ENCODE measurements at regions of chr22 and their contacts with region 1.

Region 1: GRCh38 chr22:24156913-24157821 is 24.1 kb upstream of the SUSD2 start:
- DNase-seq: peak; percentile 93
- ATAC-seq: peak; percentile 90
- H3K4me3 Mint-ChIP-seq: peak overlapping the region; percentile 75
- H3K27ac Mint-ChIP-seq: no peak overlapping the region
- H3K4me1 Mint-ChIP-seq: peaks cover 21% of the 10 kb centered on the region
- H3K27me3 Mint-ChIP-seq: 0 out of 2 replicates have a peak, but pooled peaks cover 3% of the 10 kb centered on the region
- CTCF ChIP-seq: peak; percentile 64

Region 2: DNA sequence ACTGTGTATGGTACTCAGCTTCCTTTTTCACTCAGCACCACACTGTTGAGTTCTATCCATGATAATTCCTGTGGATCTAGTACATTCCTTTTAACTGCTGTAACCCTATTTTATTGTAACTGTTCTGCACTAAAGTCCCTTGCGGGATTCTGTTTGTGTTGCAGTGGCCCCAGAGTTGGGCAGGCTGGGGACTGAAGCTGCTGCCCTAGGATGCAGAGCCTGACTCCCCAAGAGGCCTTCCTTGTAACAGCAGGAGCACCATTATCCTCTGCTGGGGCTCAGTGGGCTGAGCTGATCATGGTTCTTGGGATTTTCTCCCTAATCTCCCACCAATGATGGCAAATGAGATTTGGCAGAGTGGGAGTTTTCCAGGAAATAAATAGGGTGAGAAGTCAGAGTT is 68.4 kb before region 1 on chr22:
- CTCF ChIA-PET with region 1: interaction called, 27 read pairs
- POLR2A ChIA-PET with region 1: no interaction called
- DNase-seq: no peak
- ATAC-seq: no peak
- H3K4me3 Mint-ChIP-seq: no peak overlapping the region
- H3K27ac Mint-ChIP-seq: no peak overlapping the region
- H3K4me1 Mint-ChIP-seq: no peaks in the 10 kb centered on the region
- H3K27me3 Mint-ChIP-seq: no peaks in the 10 kb centered on the region
- CTCF ChIP-seq: no peak

Region 3: GRCh38 chr22:24125941-24126340 is 31.2 kb before region 1 on chr22:
- CTCF ChIA-PET with region 1: interaction called, 40 read pairs
- POLR2A ChIA-PET with region 1: no interaction called
- DNase-seq: no peak
- ATAC-seq: no peak
- H3K4me3 Mint-ChIP-seq: no peak overlapping the region
- H3K27ac Mint-ChIP-seq: no peak overlapping the region
- H3K4me1 Mint-ChIP-seq: no peaks in the 10 kb centered on the region
- H3K27me3 Mint-ChIP-seq: no peaks in the 10 kb centered on the region
- CTCF ChIP-seq: no peak

Region 4: GRCh38 chr22:24140357-24140756 is 16.8 kb before region 1 on chr22:
- CTCF ChIA-PET with region 1: interaction called, 99 read pairs
- POLR2A ChIA-PET with region 1: no interaction called
- DNase-seq: no peak
- ATAC-seq: peak; percentile 30; the same call in 1 of the 2 replicates
- H3K4me3 Mint-ChIP-seq: no peak overlapping the region
- H3K27ac Mint-ChIP-seq: no peak overlapping the region
- H3K4me1 Mint-ChIP-seq: peaks cover 10% of the 10 kb centered on the region
- H3K27me3 Mint-ChIP-seq: no peaks in the 10 kb centered on the region
- CTCF ChIP-seq: no peak

Region 5: GRCh38 chr22:24175160-24175808 is 18.1 kb after region 1 on chr22:
- CTCF ChIA-PET with region 1: interaction called, 96 read pairs
- POLR2A ChIA-PET with region 1: no interaction called
- DNase-seq: peak; percentile 91
- ATAC-seq: peak; percentile 85
- H3K4me3 Mint-ChIP-seq: no peak overlapping the region
- H3K27ac Mint-ChIP-seq: no peak overlapping the region
- H3K4me1 Mint-ChIP-seq: no peaks in the 10 kb centered on the region
- H3K27me3 Mint-ChIP-seq: no peaks in the 10 kb centered on the region
- CTCF ChIP-seq: peak; percentile 90

Region 6: DNA sequence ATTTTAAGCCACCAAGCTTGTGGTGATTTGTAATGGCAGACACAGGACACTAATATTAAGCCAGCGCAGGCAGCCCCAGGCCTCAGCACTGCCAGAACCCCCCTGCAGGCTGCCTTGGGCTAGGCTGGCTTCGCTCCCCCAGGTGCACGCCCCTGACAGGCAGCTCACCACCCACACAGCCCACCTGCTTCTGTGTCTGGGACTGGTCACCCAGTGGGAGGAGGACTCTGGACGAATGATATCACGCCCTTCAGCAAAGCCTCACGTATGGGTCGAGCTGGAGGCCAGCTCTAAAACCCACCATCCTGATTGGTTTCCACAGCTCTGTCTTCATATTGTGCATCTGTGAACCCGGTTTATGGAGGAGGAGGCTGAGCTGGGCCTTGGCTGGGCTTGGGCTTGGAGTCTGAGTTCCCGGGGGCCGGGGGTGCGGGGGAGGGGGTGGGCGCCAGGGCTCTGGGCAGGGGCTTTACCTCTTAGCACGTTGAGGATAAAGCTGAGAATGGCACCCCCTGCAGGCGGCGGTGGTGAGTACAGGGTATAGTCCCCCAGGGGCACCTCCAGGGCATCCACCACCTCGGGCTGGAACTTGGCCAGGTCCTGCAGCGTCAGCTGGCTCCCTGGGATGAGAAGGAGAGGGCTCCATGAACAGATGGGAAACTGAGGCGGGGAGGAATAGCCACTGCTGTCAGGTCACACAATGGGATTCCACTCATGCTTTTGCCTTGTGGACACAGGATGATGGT is 73.9 kb after region 1 on chr22:
- CTCF ChIA-PET with region 1: interaction called, 29 read pairs
- POLR2A ChIA-PET with region 1: no interaction called
- DNase-seq: peak; percentile 93
- ATAC-seq: peak; percentile 98
- H3K4me3 Mint-ChIP-seq: no peak overlapping the region
- H3K27ac Mint-ChIP-seq: no peak overlapping the region
- H3K4me1 Mint-ChIP-seq: peaks cover 3% of the 10 kb centered on the region
- H3K27me3 Mint-ChIP-seq: no peaks in the 10 kb centered on the region
- CTCF ChIP-seq: peak; percentile 78